Activated T-helper 1 cell treated with anti-CD3 and anti-CD28 coated beads, Interleukin-12 subunit alpha, Interleukin-12 subunit beta, Interleukin-2, Interleukin-4 antibody, amounts not matched to agents 30 ng/mL and 10 ng/mL and 1 ng/mL, durations not matched to agents 14 hours and 24 hours and 36 hours (primary cell): ENCODE measurements at regions of chr10 and their contacts with region 1.

Region 1: GRCh38 chr10:97407211-97407951 is 6.2 kb upstream of the RRP12 start:
- DNase-seq: peak; percentile 55
- H3K4me3 Mint-ChIP-seq: peak overlapping the region; percentile 57
- H3K27ac Mint-ChIP-seq: peak overlapping the region; percentile 46
- H3K4me1 Mint-ChIP-seq: peaks cover 11% of the 10 kb centered on the region
- H3K27me3 Mint-ChIP-seq: no peaks in the 10 kb centered on the region

Region 2: DNA sequence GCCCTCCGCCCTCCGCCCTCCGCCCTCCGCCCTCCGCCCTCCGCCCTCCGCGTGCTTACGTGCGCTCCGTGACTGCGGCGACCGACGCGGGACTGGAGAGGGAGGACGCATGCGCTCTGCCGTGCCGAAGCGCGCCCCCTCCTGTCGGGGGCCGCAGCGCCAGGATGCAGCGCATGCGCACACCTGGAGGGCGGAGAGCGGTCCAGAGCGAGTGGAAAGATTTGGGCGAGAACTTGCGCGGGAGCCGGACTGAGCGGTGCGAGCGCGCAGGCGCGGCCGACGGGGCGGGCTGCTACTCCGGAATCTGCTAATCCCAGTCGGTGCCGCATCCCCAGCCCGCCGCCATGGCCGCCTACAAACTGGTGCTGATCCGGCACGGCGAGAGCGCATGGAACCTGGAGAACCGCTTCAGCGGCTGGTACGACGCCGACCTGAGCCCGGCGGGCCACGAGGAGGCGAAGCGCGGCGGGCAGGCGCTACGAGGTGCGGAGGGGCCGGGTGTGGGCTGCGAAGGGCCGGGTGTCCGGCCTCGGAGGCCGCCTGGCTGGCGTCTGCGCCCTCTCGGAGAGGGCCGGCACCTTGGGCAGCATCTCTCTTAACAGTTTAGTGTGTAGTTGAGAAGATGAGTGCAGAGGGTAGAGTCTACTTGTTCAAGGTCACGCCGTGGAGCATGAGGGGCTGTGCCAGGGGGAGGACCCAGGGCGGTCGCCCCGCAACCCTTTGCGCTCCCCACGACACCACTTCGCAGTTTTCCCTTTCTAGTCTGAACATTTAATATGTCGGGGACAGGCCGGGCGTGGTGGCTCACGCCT is 18.8 kb after region 1 on chr10 and contains the start of gene PGAM1:
- intact Hi-C with region 1: loop called (anchors 1 kb)
- DNase-seq: peak; percentile 98
- H3K4me3 Mint-ChIP-seq: peak within 1 kb of the TSS; percentile 94
- H3K27ac Mint-ChIP-seq: peak within 1 kb of the TSS; percentile 99
- H3K4me1 Mint-ChIP-seq: peaks cover 46% of the 10 kb centered on the region
- H3K27me3 Mint-ChIP-seq: peaks cover 2% of the 10 kb centered on the region
- total RNA-seq, gene PGAM1: 967 and 979 TPM in 2 replicates

Region 3: GRCh38 chr10:97463363-97464132 is 56.2 kb after region 1 on chr10:
- intact Hi-C with region 1: loop called (anchors 5 kb)
- DNase-seq: peak; percentile 18
- H3K4me3 Mint-ChIP-seq: no peak overlapping the region
- H3K27ac Mint-ChIP-seq: no peak overlapping the region
- H3K4me1 Mint-ChIP-seq: no peaks in the 10 kb centered on the region
- H3K27me3 Mint-ChIP-seq: no peaks in the 10 kb centered on the region

Region 4: GRCh38 chr10:97546456-97547270 is 139.3 kb after region 1 on chr10:
- intact Hi-C with region 1: no loop called
- DNase-seq: no peak
- H3K4me3 Mint-ChIP-seq: no peak overlapping the region
- H3K27ac Mint-ChIP-seq: no peak overlapping the region
- H3K4me1 Mint-ChIP-seq: peaks cover 35% of the 10 kb centered on the region
- H3K27me3 Mint-ChIP-seq: no peaks in the 10 kb centered on the region